Activated naive CD4-positive, alpha-beta T cell treated with anti-CD3 and anti-CD28 coated beads for 36 hours (primary cell): ENCODE measurements at regions of chr15 and their contacts with region 1.

Region 1: DNA sequence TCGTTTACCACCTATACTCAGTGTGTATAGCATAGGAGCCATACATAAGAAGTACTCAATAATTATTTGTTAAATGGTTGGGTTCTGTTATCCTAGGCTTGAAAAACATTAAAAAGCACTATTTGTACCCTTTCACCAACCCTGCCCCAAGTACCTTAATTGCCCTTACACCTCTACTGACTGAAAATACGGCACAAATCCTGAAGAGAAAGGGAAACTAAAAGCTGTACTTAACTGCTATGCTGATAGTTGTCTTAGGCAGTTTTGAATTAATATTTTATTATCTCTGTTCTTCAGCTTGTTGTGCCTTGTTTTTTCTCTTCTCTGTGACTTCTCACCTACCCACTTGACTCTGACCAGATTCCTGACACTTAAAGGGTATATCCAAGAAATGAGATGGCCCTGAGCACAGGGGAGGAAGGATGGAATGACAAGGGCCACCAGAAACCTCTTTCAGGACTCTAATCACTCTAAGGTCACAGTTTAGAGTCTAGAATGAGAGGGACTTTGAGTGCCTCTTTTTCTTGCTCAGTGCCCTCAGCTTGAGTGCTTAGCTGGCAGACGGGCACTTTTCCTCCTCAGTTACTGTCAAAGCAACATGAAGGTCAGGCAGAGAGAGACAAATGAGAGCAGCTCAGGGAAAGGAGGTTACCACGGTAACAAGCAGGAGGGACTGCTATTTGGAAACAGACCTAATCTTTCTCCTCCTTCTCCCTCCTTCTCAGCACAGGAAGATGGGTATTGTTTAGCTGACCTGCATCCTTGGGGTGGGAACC is 136.5 kb downstream of the ZNF609 start:
- DNase-seq: peak; percentile 59
- H3K4me3 Mint-ChIP-seq: peak overlapping the region; percentile 71
- H3K27ac Mint-ChIP-seq: peak overlapping the region; percentile 89
- H3K4me1 Mint-ChIP-seq: peaks cover 57% of the 10 kb centered on the region
- H3K27me3 Mint-ChIP-seq: no peaks in the 10 kb centered on the region

Region 2: GRCh38 chr15:64443747-64444621 is 152.9 kb before region 1 on chr15:
- CTCF ChIA-PET with region 1: no interaction called
- intact Hi-C with region 1: loop called (anchors 1 kb)
- DNase-seq: peak; percentile 20
- H3K4me3 Mint-ChIP-seq: peak overlapping the region; percentile 66
- H3K27ac Mint-ChIP-seq: peak overlapping the region; percentile 94
- H3K4me1 Mint-ChIP-seq: peaks cover 62% of the 10 kb centered on the region
- H3K27me3 Mint-ChIP-seq: no peaks in the 10 kb centered on the region

Region 3: GRCh38 chr15:64466408-64467141 is 130.3 kb before region 1 on chr15:
- CTCF ChIA-PET with region 1: no interaction called
- intact Hi-C with region 1: no loop called
- DNase-seq: no peak
- H3K4me3 Mint-ChIP-seq: no peak overlapping the region
- H3K27ac Mint-ChIP-seq: no peak overlapping the region
- H3K4me1 Mint-ChIP-seq: peaks cover 76% of the 10 kb centered on the region
- H3K27me3 Mint-ChIP-seq: no peaks in the 10 kb centered on the region

Region 4: DNA sequence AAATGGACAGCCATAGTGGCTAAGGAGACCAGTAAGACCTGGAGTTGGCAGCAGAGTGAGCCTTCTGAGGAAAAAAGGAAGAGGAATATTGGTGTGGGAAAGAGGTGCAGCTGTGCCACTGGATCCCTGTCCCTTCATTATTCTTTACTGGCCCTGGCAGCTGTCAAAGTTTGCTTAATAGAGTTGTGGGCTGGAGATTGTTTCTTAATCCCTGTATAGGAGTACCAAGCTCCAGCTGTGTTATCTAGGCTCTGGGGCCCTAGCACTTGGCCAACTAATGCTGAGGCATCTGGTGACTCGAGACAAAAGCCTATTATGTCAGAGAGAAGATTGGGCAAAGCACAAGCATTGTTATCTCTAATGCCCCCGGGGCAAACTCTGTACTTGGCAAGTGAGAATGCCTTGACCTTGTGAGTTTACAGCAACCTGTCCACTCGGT is 75.1 kb before region 1 on chr15:
- CTCF ChIA-PET with region 1: no interaction called
- intact Hi-C with region 1: no loop called
- DNase-seq: no peak
- H3K4me3 Mint-ChIP-seq: no peak overlapping the region
- H3K27ac Mint-ChIP-seq: no peak overlapping the region
- H3K4me1 Mint-ChIP-seq: peaks cover 67% of the 10 kb centered on the region
- H3K27me3 Mint-ChIP-seq: no peaks in the 10 kb centered on the region

Region 5: GRCh38 chr15:64574301-64575017 is 22.4 kb before region 1 on chr15:
- CTCF ChIA-PET with region 1: no interaction called
- intact Hi-C with region 1: loop called (anchors 2 kb)
- DNase-seq: no peak
- H3K4me3 Mint-ChIP-seq: no peak overlapping the region
- H3K27ac Mint-ChIP-seq: peak overlapping the region; percentile 78
- H3K4me1 Mint-ChIP-seq: peaks cover 54% of the 10 kb centered on the region
- H3K27me3 Mint-ChIP-seq: no peaks in the 10 kb centered on the region

Region 6: GRCh38 chr15:64582202-64582601 is 14.7 kb before region 1 on chr15:
- CTCF ChIA-PET with region 1: no interaction called
- intact Hi-C with region 1: loop called (anchors 2 kb)
- DNase-seq: no peak
- H3K4me3 Mint-ChIP-seq: no peak overlapping the region
- H3K27ac Mint-ChIP-seq: no peak overlapping the region
- H3K4me1 Mint-ChIP-seq: peaks cover 46% of the 10 kb centered on the region
- H3K27me3 Mint-ChIP-seq: no peaks in the 10 kb centered on the region